ENCODE measurements at regions of chr7 and their contacts with region 1.

Region 1: DNA sequence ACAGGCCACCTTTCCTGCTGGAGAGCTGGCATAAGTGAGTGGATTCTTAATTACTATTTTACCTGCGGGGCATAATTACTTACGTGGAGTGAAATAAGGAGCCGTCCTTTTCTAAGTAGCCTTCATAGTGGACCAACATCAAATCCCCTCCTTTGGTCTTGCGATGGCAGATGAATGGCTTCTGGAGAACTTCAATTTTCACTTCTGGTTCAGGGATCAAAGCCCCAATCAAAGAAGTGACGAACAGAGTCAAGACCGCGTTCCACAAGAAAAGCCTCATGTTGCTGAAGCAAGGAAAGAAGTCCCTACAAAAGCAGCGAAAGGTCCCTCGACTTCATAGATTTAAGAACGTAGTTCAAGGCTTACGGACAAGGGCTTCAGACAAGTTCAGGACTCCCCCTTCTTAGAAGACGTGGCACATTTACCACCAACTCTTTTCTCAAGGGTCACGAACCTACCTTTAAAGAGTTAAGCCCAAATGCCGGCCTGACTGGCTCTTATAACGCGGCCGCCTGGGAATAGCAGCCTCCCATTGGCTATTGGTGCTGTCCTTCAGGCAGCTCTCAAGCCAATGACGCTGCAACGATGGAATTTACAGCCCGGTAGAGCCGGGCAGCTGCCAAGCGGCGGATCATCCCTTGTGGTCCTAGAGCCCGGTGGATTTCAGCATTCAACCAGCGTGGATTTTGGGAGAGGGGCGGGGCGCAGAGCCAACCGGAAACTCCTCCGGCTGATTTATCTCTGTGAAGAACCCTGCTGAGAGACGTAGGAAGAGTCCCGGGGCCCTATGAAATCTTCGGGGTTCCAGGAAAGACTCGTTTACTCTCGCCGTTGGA is at the start of gene FKBP14:
- DNase-seq: peak; percentile 98
- H3K4me3 ChIP-seq: peak within 1 kb of the TSS; percentile 74 to 100 (median 99)
- H3K27ac ChIP-seq: peak within 1 kb of the TSS; percentile 83
- H3K4me1 ChIP-seq: peaks cover 35% of the 10 kb centered on the region
- H3K27me3 ChIP-seq: no peaks in the 10 kb centered on the region
- CTCF ChIP-seq: no peak
- POLR2A ChIP-seq: peak; percentile 79
- total RNA-seq, gene FKBP14: 37.4 and 37.6 TPM in 2 replicates

Region 2: GRCh38 chr7:29946428-29947186 is 79.8 kb before region 1 on chr7:
- CTCF ChIA-PET with region 1: no interaction called
- POLR2A ChIA-PET with region 1: no interaction called
- dilution Hi-C with region 1: no loop called
- intact Hi-C with region 1: loop called (anchors 2 kb)
- DNase-seq: peak; percentile 40
- H3K4me3 ChIP-seq: no peak overlapping the region
- H3K27ac ChIP-seq: no peak overlapping the region
- H3K4me1 ChIP-seq: no peaks in the 10 kb centered on the region
- H3K27me3 ChIP-seq: no peaks in the 10 kb centered on the region
- CTCF ChIP-seq: peak; percentile 41 to 46
- POLR2A ChIP-seq: no peak

Region 3: DNA sequence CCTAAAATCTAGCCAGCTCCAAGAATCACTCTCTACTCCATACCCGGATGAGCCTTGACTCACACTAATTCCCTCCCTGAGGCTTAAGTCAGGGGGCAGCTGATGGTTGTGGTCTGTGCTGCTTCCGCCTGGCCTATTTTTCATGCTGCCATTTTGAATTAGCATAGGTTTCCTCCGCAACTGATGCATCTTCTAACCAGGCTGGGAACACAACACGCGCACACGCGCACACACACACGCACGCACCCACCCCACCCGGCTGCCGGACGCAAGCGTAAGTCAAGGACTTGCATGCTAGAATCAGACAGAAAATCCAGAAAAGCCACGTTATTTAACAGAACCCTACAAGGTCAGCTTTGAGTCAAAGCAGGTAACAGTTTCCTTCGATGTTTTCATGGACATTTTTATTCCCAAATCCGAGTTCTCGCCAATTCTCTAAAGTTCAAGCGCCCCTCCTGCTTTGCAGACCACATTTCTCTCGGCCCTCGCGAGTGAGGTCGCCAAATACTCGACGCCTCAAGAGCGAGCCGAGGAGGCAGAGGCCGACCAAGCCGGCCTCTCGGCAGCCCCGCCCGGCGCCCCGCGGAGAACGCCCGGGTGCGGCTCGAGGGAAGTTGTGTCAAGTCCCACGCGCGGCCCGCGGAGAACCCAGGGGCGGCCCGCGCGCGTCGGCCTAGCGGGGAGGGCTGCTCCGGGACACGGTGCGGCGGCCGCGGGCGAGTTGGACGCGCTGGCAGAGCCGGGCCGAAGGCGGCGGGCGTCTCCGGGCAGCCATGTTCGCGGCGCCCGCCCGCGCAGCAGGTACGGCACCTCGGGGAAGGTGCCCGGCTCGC is 37.8 kb before region 1 on chr7:
- CTCF ChIA-PET with region 1: interaction called, 3 read pairs
- POLR2A ChIA-PET with region 1: interaction called, 5 read pairs
- dilution Hi-C with region 1: no loop called
- intact Hi-C with region 1: loop called (anchors 1 kb)
- DNase-seq: peak; percentile 47
- H3K4me3 ChIP-seq: peak overlapping the region; percentile 65 to 88 (median 87)
- H3K27ac ChIP-seq: peak overlapping the region; percentile 93
- H3K4me1 ChIP-seq: peaks cover 22% of the 10 kb centered on the region
- H3K27me3 ChIP-seq: no peaks in the 10 kb centered on the region
- CTCF ChIP-seq: no peak
- POLR2A ChIP-seq: no peak

Region 4: DNA sequence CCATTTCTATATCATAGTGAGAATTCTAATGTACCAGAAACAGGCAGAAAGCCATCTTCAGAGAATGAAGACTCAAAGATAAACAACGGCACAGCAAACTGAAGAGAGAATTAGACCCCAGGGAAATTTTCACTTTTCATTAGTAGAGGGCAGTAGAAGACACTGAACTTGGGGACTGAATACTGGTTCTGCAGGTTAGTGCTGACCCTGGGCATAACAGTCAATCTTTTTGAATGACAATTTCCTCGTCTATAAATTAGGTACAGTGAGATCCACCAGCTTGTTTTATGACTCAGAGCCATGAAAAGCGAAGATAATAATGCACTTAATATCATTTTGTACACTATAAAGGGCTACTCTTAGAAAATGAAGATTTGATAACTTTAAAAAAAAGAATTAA is 13.7 kb before region 1 on chr7:
- CTCF ChIA-PET with region 1: no interaction called
- POLR2A ChIA-PET with region 1: no interaction called
- dilution Hi-C with region 1: no loop called
- intact Hi-C with region 1: no loop called
- DNase-seq: no peak
- H3K4me3 ChIP-seq: no peak overlapping the region
- H3K27ac ChIP-seq: no peak overlapping the region
- H3K4me1 ChIP-seq: no peaks in the 10 kb centered on the region
- H3K27me3 ChIP-seq: no peaks in the 10 kb centered on the region
- CTCF ChIP-seq: no peak
- POLR2A ChIP-seq: no peak

Region 5: GRCh38 chr7:30134611-30135545 is 108.4 kb after region 1 on chr7 and contains the start of gene MTURN:
- CTCF ChIA-PET with region 1: no interaction called
- POLR2A ChIA-PET with region 1: no interaction called
- dilution Hi-C with region 1: no loop called
- intact Hi-C with region 1: loop called (anchors 2 kb)
- DNase-seq: peak; percentile 75
- H3K4me3 ChIP-seq: peak within 1 kb of the TSS; percentile 59 to 83 (median 59)
- H3K27ac ChIP-seq: peak within 1 kb of the TSS; percentile 41
- H3K4me1 ChIP-seq: peaks cover 6% of the 10 kb centered on the region
- H3K27me3 ChIP-seq: peaks cover 0 to 4% of the 10 kb centered on the region in 2 experiments
- CTCF ChIP-seq: no peak
- POLR2A ChIP-seq: no peak
- total RNA-seq, gene MTURN: 4.8 and 6.6 TPM in 2 replicates

Measured in endothelial cell of umbilical vein (primary cell).